Endothelial cell of umbilical vein (primary cell): ENCODE measurements at regions of chr19 and their contacts with region 1.

Region 1: GRCh38 chr19:9140159-9140874 is at the start of gene ZNF317:
- DNase-seq: peak; percentile 91
- H3K4me3 ChIP-seq: peak within 1 kb of the TSS; percentile 78 to 95 (median 92)
- H3K27ac ChIP-seq: peak within 1 kb of the TSS; percentile 87
- H3K4me1 ChIP-seq: peaks cover 11% of the 10 kb centered on the region
- H3K27me3 ChIP-seq: no peaks in the 10 kb centered on the region
- CTCF ChIP-seq: no peak
- POLR2A ChIP-seq: peak; percentile 73
- total RNA-seq, gene ZNF317: 29.5 and 30.4 TPM in 2 replicates

Region 2: GRCh38 chr19:9128171-9128570 is 12.1 kb before region 1 on chr19:
- CTCF ChIA-PET with region 1: interaction called, 4 read pairs
- POLR2A ChIA-PET with region 1: no interaction called
- dilution Hi-C with region 1: no loop called
- intact Hi-C with region 1: loop called (anchors 1 kb)
- DNase-seq: peak; percentile 96
- H3K4me3 ChIP-seq: no peak overlapping the region
- H3K27ac ChIP-seq: peak overlapping the region; percentile 76
- H3K4me1 ChIP-seq: peaks cover 5% of the 10 kb centered on the region
- H3K27me3 ChIP-seq: no peaks in the 10 kb centered on the region
- CTCF ChIP-seq: no peak
- POLR2A ChIP-seq: peak; percentile 29

Region 3: DNA sequence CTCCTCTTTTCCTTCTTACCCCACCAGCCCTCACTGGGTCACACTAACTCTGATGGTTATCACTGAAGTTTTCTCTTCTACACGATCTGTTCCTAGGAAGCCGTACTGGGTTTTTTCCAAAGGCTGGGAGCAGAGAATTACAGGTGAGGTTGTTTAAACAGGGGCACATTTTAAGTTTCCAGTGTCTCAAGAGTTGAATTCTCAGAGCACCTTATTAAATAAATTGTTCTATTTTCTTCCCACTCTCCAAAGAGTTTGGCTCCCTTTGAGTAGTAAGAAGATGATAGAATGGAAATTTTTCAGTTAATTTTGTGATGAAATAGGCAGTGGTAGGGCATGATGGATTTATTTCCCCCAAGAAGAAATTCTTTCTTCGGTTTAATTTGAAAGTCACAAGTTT is 79.2 kb after region 1 on chr19 and contains the start of gene OR7D4:
- CTCF ChIA-PET with region 1: no interaction called
- POLR2A ChIA-PET with region 1: no interaction called
- dilution Hi-C with region 1: no loop called
- intact Hi-C with region 1: no loop called
- DNase-seq: no peak
- H3K4me3 ChIP-seq: no peak within 1 kb of the TSS
- H3K27ac ChIP-seq: no peak within 1 kb of the TSS
- H3K4me1 ChIP-seq: no peaks in the 10 kb centered on the region
- H3K27me3 ChIP-seq: no peaks in the 10 kb centered on the region
- CTCF ChIP-seq: no peak
- POLR2A ChIP-seq: no peak
- total RNA-seq, gene OR7D4: not detected in 2 replicates

Region 4: DNA sequence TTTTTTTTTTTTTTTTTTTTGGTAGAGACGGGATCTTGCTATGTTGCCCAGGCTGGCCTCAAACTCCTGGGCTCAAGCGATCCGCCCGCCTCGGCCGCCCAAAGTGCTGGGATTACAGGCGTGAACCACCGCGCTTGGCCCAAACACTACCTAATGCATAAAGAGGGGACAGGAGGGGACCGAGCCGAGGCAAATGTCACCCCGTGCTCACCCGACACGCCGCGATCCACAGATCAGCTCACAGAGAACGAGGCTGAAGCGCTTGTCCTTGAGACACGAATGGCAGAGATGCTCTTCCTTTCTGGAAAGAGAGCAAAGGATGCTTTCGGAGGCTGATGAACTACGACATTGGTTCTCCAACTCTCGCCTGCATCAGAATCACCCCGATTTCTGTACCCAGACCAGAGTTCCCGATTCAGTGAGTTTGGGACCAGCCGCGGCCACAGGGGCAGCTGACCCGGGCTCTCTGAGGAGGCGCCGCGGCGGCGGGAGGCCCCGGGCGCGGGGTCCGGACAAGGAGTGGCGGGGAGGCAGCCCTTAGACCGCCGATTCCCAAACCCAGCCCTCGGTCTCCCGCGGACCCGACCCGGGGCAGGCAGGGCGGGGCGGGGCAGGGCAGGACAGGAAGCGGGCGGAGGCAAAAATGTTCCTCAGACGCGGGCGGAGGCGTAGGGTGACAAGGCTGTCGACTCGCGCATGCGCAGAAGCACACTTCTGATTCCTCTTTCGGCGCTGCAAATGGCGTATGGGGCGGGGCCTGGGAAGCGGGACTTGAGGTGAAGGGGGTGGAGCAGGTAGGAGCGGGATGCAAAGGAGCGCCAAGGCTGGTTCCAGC is 169.0 kb after region 1 on chr19 and contains the start of gene ZNF699:
- CTCF ChIA-PET with region 1: no interaction called
- POLR2A ChIA-PET with region 1: no interaction called
- dilution Hi-C with region 1: no loop called
- intact Hi-C with region 1: loop called (anchors 2 kb)
- DNase-seq: peak; percentile 98
- H3K4me3 ChIP-seq: peak within 1 kb of the TSS; percentile 52 to 88 (median 67)
- H3K27ac ChIP-seq: peak within 1 kb of the TSS; percentile 55
- H3K4me1 ChIP-seq: peaks cover 7% of the 10 kb centered on the region
- H3K27me3 ChIP-seq: no peaks in the 10 kb centered on the region
- CTCF ChIP-seq: no peak
- POLR2A ChIP-seq: no peak
- total RNA-seq, gene ZNF699: 3.9 and 4.7 TPM in 2 replicates

Region 5: DNA sequence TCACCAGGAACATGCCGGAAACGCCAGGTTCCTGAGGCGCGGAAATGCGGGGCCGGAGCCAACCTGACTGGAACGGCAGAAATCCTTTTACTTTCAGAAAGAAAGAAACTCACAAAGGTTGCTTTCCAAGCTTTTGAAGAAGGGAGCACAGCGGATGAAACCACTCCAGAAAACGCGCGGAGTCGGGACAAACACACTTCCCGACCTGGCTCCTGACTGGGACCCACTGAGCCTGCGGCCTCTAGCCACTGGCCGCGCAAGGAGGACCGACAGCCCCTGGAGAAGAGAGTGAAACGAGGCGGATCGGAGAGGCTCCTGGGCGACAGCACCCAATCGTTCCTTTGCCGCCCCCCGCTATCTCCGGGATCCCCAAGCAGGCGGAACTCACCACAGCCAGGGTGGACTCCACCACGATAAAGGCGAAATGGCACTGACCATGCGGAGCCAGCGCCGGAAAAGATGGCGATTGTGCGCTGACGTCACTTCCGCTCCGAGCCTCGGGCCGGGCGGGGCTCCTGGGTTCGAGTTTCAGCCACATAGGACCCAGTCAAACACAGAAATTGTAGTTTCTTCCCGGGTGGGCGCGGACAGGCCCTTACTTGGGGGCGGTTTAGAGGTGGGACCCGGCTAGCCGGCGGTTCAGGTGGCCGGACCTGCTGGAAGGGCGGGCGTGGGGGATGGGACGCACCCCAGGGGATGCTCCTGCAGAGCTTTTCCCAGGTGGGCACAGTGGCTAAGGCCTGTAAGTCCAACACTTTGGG is 443.9 kb after region 1 on chr19 and contains the start of gene ZNF121:
- CTCF ChIA-PET with region 1: no interaction called
- POLR2A ChIA-PET with region 1: no interaction called
- dilution Hi-C with region 1: no loop called
- intact Hi-C with region 1: loop called (anchors 1 kb)
- DNase-seq: peak; percentile 82
- H3K4me3 ChIP-seq: peak within 1 kb of the TSS; percentile 72 to 97 (median 90)
- H3K27ac ChIP-seq: peak within 1 kb of the TSS; percentile 82
- H3K4me1 ChIP-seq: no peaks in the 10 kb centered on the region
- H3K27me3 ChIP-seq: no peaks in the 10 kb centered on the region
- CTCF ChIP-seq: no peak
- POLR2A ChIP-seq: peak; percentile 94
- total RNA-seq, gene ZNF121: 21.4 and 25.1 TPM in 2 replicates

Region 6: GRCh38 chr19:9785367-9786331 is 645.3 kb after region 1 on chr19:
- CTCF ChIA-PET with region 1: no interaction called
- POLR2A ChIA-PET with region 1: no interaction called
- dilution Hi-C with region 1: no loop called
- intact Hi-C with region 1: loop called (anchors 1 kb)
- DNase-seq: peak; percentile 92
- H3K4me3 ChIP-seq: peak overlapping the region; percentile 77 to 93 (median 78)
- H3K27ac ChIP-seq: peak overlapping the region; percentile 54
- H3K4me1 ChIP-seq: peaks cover 4% of the 10 kb centered on the region
- H3K27me3 ChIP-seq: no peaks in the 10 kb centered on the region
- CTCF ChIP-seq: no peak
- POLR2A ChIP-seq: peak; percentile 54

Region 7: DNA sequence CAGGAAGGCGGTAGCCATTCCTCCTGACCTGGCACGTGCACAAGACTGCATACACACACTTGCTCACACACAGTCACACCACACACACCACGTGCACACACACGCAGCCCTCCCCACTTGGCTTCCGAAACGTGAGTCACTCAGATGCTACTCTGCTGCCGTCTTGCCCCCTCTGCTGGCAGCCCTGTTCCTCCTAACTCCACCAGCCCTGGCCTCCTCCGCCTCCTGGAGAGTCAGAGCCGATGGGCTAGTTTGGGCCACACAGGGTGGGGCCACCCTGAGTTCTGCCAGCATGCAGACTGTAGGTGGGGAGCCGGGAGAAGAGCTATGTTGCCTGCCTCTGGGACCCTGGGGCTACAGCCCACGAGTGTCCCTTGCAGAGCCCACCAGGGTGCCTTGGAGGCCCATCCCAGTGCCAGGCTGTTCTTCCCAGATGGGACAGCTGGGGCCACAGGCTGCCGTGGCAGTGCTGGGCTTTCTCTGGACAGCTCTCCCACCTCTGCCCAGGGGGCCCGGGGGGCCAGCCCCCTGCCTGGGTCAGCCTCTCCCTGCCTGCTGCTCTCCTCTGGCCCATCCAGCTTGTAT is 706.9 kb after region 1 on chr19:
- CTCF ChIA-PET with region 1: no interaction called
- POLR2A ChIA-PET with region 1: no interaction called
- dilution Hi-C with region 1: no loop called
- intact Hi-C with region 1: loop called (anchors 5 kb)
- DNase-seq: peak; percentile 60
- H3K4me3 ChIP-seq: no peak overlapping the region
- H3K27ac ChIP-seq: no peak overlapping the region
- H3K4me1 ChIP-seq: no peaks in the 10 kb centered on the region
- H3K27me3 ChIP-seq: no peaks in the 10 kb centered on the region
- CTCF ChIP-seq: peak; percentile 67
- POLR2A ChIP-seq: no peak

Region 8: GRCh38 chr19:10027158-10027693 is 886.9 kb after region 1 on chr19:
- CTCF ChIA-PET with region 1: no interaction called
- POLR2A ChIA-PET with region 1: no interaction called
- dilution Hi-C with region 1: no loop called
- intact Hi-C with region 1: loop called (anchors 2 kb)
- DNase-seq: no peak
- H3K4me3 ChIP-seq: no peak overlapping the region
- H3K27ac ChIP-seq: no peak overlapping the region
- H3K4me1 ChIP-seq: peaks cover 4% of the 10 kb centered on the region
- H3K27me3 ChIP-seq: peaks cover 3 to 4% of the 10 kb centered on the region in 2 experiments
- CTCF ChIP-seq: no peak
- POLR2A ChIP-seq: no peak